Mammary epithelial cell (primary cell): ENCODE measurements at regions of chr9 and their contacts with region 1.

Region 1: GRCh38 chr9:124537926-124538325 is 30.7 kb upstream of the NR5A1 start:
- DNase-seq: no peak
- H3K4me3 ChIP-seq: no peak overlapping the region
- H3K27ac ChIP-seq: no peak overlapping the region
- H3K4me1 ChIP-seq: no peaks in the 10 kb centered on the region
- H3K27me3 ChIP-seq: no peaks in the 10 kb centered on the region
- CTCF ChIP-seq: no peak

Region 2: DNA sequence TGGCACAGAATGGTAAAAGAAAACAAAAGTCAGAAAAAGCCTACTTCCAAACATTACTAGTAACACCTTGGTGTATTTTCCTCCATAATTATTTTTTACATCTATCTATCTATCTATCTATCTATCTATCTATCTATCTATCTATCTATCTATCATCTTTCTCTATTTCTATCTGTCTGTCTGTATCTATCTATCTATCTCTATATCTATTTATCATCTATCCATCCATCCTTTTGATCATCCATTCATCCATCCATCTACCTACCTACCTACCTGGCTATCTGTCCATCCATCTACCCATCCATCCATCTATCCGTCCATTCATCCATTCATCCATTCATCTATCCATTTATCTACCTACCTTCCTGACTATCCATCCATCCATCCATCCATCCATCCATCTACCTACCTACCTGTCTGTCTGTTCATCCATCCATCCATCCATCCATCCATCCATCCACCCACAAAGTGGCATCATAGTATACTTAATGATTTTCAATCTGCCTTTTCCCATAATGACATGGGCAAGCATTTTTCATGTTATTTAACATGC is 402.0 kb before region 1 on chr9:
- CTCF ChIA-PET with region 1: no interaction called
- dilution Hi-C with region 1: no loop called
- in situ Hi-C with region 1: no loop called
- intact Hi-C with region 1: no loop called
- DNase-seq: no peak
- H3K4me3 ChIP-seq: no peak overlapping the region
- H3K27ac ChIP-seq: no peak overlapping the region
- H3K4me1 ChIP-seq: no peaks in the 10 kb centered on the region
- H3K27me3 ChIP-seq: no peaks in the 10 kb centered on the region
- CTCF ChIP-seq: no peak

Region 3: GRCh38 chr9:124480621-124480981 is 57.3 kb before region 1 on chr9:
- CTCF ChIA-PET with region 1: no interaction called
- dilution Hi-C with region 1: loop called (anchors 5 kb)
- in situ Hi-C with region 1: no loop called
- intact Hi-C with region 1: no loop called
- DNase-seq: peak; percentile 20
- H3K4me3 ChIP-seq: no peak overlapping the region
- H3K27ac ChIP-seq: no peak overlapping the region
- H3K4me1 ChIP-seq: peaks cover 5% of the 10 kb centered on the region
- H3K27me3 ChIP-seq: peaks cover 17% of the 10 kb centered on the region
- CTCF ChIP-seq: no peak